CD4-positive, alpha-beta memory T cell (primary cell): ENCODE measurements at regions of chr5 and their contacts with region 1.

Region 1: GRCh38 chr5:35876921-35877320 is 20.2 kb downstream of the IL7R start:
- DNase-seq: no peak
- H3K4me3 ChIP-seq: no peak overlapping the region
- H3K4me3 Mint-ChIP-seq: peak overlapping the region in 4 of 8 donors; percentile 3 to 58 (median 31)
- H3K27ac ChIP-seq: peak overlapping the region; percentile 16
- H3K27ac Mint-ChIP-seq: peak overlapping the region; percentile 53 to 89 (median 73)
- H3K4me1 ChIP-seq: peaks cover 57% of the 10 kb centered on the region
- H3K4me1 Mint-ChIP-seq: peaks cover 61 to 81% (median 71%) of the 10 kb centered on the region in 4 donors
- H3K27me3 ChIP-seq: no peaks in the 10 kb centered on the region
- H3K27me3 Mint-ChIP-seq: no peaks in the 10 kb centered on the region

Region 2: GRCh38 chr5:35657877-35658276 is 219.0 kb before region 1 on chr5:
- CTCF ChIA-PET with region 1: no interaction called
- POLR2A ChIA-PET with region 1: interaction called, 57 read pairs
- intact Hi-C with region 1: no loop called
- DNase-seq: peak in 1 of 5 donors; percentile 18
- H3K4me3 ChIP-seq: no peak overlapping the region
- H3K4me3 Mint-ChIP-seq: peak overlapping the region in 2 of 8 donors; percentile 29 to 47
- H3K27ac ChIP-seq: no peak overlapping the region
- H3K27ac Mint-ChIP-seq: peak overlapping the region in 5 of 7 donors; percentile 1 to 86 (median 45)
- H3K4me1 ChIP-seq: no peaks in the 10 kb centered on the region
- H3K4me1 Mint-ChIP-seq: peaks cover 6 to 23% (median 13%) of the 10 kb centered on the region in 4 donors
- H3K27me3 ChIP-seq: no peaks in the 10 kb centered on the region
- H3K27me3 Mint-ChIP-seq: no peaks in the 10 kb centered on the region

Region 3: GRCh38 chr5:35672995-35673394 is 203.9 kb before region 1 on chr5:
- CTCF ChIA-PET with region 1: no interaction called
- POLR2A ChIA-PET with region 1: interaction called, 36 read pairs
- intact Hi-C with region 1: no loop called
- DNase-seq: peak; percentile 32 to 63 (median 54)
- H3K4me3 ChIP-seq: no peak overlapping the region
- H3K4me3 Mint-ChIP-seq: peak overlapping the region in 7 of 8 donors; percentile 31 to 76 (median 47)
- H3K27ac ChIP-seq: peak overlapping the region; percentile 7
- H3K27ac Mint-ChIP-seq: peak overlapping the region; percentile 68 to 92 (median 86)
- H3K4me1 ChIP-seq: peaks cover 58% of the 10 kb centered on the region
- H3K4me1 Mint-ChIP-seq: peaks cover 43 to 68% (median 54%) of the 10 kb centered on the region in 4 donors
- H3K27me3 ChIP-seq: no peaks in the 10 kb centered on the region
- H3K27me3 Mint-ChIP-seq: no peaks in the 10 kb centered on the region

Region 4: GRCh38 chr5:35815089-35815936 is 61.6 kb before region 1 on chr5:
- CTCF ChIA-PET with region 1: interaction called, 9 read pairs
- POLR2A ChIA-PET with region 1: interaction called, 307 read pairs
- intact Hi-C with region 1: no loop called
- DNase-seq: peak in 3 of 5 donors; percentile 51 to 55 (median 53)
- H3K4me3 ChIP-seq: peak overlapping the region in 1 of 2 donors; percentile 26
- H3K4me3 Mint-ChIP-seq: no peak overlapping the region
- H3K27ac ChIP-seq: peak overlapping the region; percentile 47
- H3K27ac Mint-ChIP-seq: no peak overlapping the region
- H3K4me1 ChIP-seq: peaks cover 97% of the 10 kb centered on the region
- H3K4me1 Mint-ChIP-seq: peaks cover 32 to 43% (median 36%) of the 10 kb centered on the region in 4 donors
- H3K27me3 ChIP-seq: no peaks in the 10 kb centered on the region
- H3K27me3 Mint-ChIP-seq: no peaks in the 10 kb centered on the region

Region 5: DNA sequence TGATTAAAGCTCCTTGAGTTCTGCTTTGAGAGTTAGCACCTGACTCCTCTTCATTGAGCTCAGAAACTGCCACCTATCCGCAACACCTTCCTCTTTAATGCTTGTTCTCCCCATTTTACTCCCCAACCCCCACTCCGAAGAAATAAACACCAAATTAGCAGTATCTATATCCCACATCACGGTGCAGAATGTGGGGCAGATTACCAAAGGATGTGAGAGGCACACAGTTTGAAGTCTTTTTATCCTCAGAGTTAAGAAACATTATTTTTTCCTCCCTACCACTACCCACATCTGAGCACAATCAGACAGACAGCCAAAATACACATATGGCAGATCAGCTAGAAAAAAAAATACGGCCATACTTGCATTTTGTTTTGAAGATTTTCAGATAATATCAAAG is 46.3 kb before region 1 on chr5:
- CTCF ChIA-PET with region 1: interaction called, 3 read pairs
- POLR2A ChIA-PET with region 1: interaction called, 307 read pairs
- intact Hi-C with region 1: no loop called
- DNase-seq: peak; percentile 80 to 90 (median 85)
- H3K4me3 ChIP-seq: peak overlapping the region in 1 of 2 donors; percentile 41
- H3K4me3 Mint-ChIP-seq: peak overlapping the region; percentile 21 to 72 (median 56)
- H3K27ac ChIP-seq: peak overlapping the region; percentile 45
- H3K27ac Mint-ChIP-seq: peak overlapping the region; percentile 57 to 99 (median 84)
- H3K4me1 ChIP-seq: peaks cover 97% of the 10 kb centered on the region
- H3K4me1 Mint-ChIP-seq: peaks cover 67 to 96% (median 88%) of the 10 kb centered on the region in 4 donors
- H3K27me3 ChIP-seq: no peaks in the 10 kb centered on the region
- H3K27me3 Mint-ChIP-seq: no peaks in the 10 kb centered on the region

Region 6: GRCh38 chr5:35902046-35902676 is 25.2 kb after region 1 on chr5:
- CTCF ChIA-PET with region 1: interaction called, 3 read pairs
- POLR2A ChIA-PET with region 1: interaction called, 92 read pairs
- intact Hi-C with region 1: no loop called
- DNase-seq: peak in 2 of 5 donors; percentile 12 to 14
- H3K4me3 ChIP-seq: no peak overlapping the region
- H3K4me3 Mint-ChIP-seq: peak overlapping the region in 2 of 8 donors; percentile 1 to 21
- H3K27ac ChIP-seq: no peak overlapping the region
- H3K27ac Mint-ChIP-seq: peak overlapping the region in 5 of 7 donors; percentile 29 to 62 (median 50)
- H3K4me1 ChIP-seq: peaks cover 42% of the 10 kb centered on the region
- H3K4me1 Mint-ChIP-seq: peaks cover 24 to 63% (median 49%) of the 10 kb centered on the region in 4 donors
- H3K27me3 ChIP-seq: no peaks in the 10 kb centered on the region
- H3K27me3 Mint-ChIP-seq: no peaks in the 10 kb centered on the region

Region 7: GRCh38 chr5:35954175-35954574 is 77.3 kb after region 1 on chr5:
- CTCF ChIA-PET with region 1: no interaction called
- POLR2A ChIA-PET with region 1: no interaction called
- intact Hi-C with region 1: no loop called
- DNase-seq: peak in 3 of 5 donors; percentile 3 to 13 (median 10)
- H3K4me3 ChIP-seq: no peak overlapping the region
- H3K4me3 Mint-ChIP-seq: no peak overlapping the region
- H3K27ac ChIP-seq: no peak overlapping the region
- H3K27ac Mint-ChIP-seq: no peak overlapping the region
- H3K4me1 ChIP-seq: no peaks in the 10 kb centered on the region
- H3K4me1 Mint-ChIP-seq: peaks cover 0 to 8% (median 5%) of the 10 kb centered on the region in 4 donors
- H3K27me3 ChIP-seq: peaks cover 6% of the 10 kb centered on the region
- H3K27me3 Mint-ChIP-seq: peaks cover 41 to 46% of the 10 kb centered on the region in 2 donors